AG04449 (cell line): ENCODE measurements at regions of chr1 and their contacts with region 1.

Region 1: DNA sequence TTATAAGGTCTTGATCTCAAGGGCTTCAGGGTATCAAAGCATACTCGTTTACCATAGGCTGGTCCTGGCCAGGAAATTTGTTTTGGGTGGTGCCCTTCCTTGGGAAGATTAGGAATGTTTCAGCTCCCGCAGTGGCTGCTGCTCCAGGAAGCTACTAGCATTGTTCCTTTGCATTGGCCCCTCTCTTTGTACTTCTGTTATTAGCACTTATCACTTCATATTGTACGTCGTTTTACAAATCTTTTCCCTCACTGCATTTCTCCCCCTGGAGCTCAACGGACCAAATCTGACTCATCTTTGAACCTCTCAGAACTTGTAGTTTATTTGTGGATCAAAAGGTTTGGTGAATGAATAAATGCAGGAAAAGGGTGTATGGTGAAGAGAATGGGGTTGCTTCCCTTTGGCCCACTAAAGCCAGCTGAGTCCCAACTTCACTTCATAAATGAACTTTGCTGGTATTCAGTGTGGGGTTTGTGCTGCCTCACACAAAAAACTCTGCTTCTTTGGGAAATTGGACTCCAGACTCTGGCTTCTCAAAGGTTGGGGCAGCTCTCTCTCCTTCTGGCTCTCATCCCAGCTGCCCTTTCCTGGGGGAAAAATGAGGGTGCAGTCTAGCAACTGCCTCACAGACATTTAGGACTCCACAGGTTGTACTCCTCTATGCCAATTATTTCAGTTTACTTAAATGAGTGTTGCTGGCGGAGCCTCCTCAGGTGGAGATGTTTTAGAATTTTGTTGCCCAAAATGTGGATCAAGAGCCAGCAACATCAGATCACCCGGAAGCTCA is 5.9 kb downstream of the GNAT2 start:
- DNase-seq: no peak
- H3K4me3 ChIP-seq: no peak overlapping the region
- CTCF ChIP-seq: no peak

Region 2: DNA sequence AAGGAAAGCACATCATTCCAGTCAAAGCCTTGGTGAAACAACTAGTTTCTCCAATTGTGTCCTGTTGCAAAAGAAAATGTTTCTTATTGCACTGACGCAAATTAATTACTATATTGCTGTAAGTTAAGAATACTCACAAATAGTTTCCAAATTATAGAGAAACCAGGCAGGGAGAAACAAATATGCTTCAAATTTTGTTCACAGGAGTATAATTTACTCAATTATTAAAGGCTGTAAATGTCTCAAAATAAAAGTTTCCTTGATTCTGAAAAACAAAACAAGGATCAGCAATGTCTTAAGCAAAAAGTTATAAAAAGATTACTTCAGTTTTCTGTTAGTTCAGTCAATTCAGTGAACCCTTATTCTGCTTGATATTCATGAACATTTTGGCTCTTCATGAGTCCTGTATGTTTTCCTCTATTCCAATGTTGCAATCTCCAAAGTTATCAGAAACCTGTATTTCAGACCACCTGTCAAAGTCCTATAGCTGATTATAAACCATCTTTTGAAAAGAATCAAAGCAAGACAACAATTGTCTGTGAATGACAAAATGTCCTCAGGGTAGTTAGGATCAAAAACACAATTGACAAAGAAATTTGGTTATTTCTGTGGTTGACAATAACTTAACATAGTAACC is 158.9 kb before region 1 on chr1:
- CTCF ChIA-PET with region 1: no interaction called
- POLR2A ChIA-PET with region 1: no interaction called
- DNase-seq: no peak
- H3K4me3 ChIP-seq: no peak overlapping the region
- CTCF ChIP-seq: no peak

Region 3: GRCh38 chr1:109598655-109599054 is 14.9 kb before region 1 on chr1:
- CTCF ChIA-PET with region 1: interaction called, 11 read pairs
- POLR2A ChIA-PET with region 1: no interaction called
- DNase-seq: no peak
- H3K4me3 ChIP-seq: no peak overlapping the region
- CTCF ChIP-seq: no peak